ENCODE measurements at regions of chr17 and their contacts with region 1.

Region 1: GRCh38 chr17:38539386-38539785 is 66.4 kb downstream of the SRCIN1 start:
- DNase-seq: no peak
- ATAC-seq: no peak
- H3K4me3 ChIP-seq: no peak overlapping the region
- H3K27ac ChIP-seq: no peak overlapping the region
- H3K4me1 ChIP-seq: no peaks in the 10 kb centered on the region
- H3K27me3 ChIP-seq: no peaks in the 10 kb centered on the region
- CTCF ChIP-seq: no peak
- POLR2A ChIP-seq: no peak
- RAD21 ChIP-seq: no peak

Region 2: GRCh38 chr17:38421871-38422827 is 117.2 kb before region 1 on chr17:
- CTCF ChIA-PET with region 1: interaction called, 10 read pairs
- POLR2A ChIA-PET with region 1: no interaction called
- RAD21 ChIA-PET with region 1: no interaction called
- intact Hi-C with region 1: no loop called
- DNase-seq: no peak
- ATAC-seq: no peak
- H3K4me3 ChIP-seq: no peak overlapping the region
- H3K27ac ChIP-seq: no peak overlapping the region
- H3K4me1 ChIP-seq: peaks cover 5 to 17% of the 10 kb centered on the region in 2 experiments; a peak in 3 of 4 replicates
- H3K27me3 ChIP-seq: no peaks in the 10 kb centered on the region
- CTCF ChIP-seq: no peak
- POLR2A ChIP-seq: no peak
- RAD21 ChIP-seq: no peak

Region 3: DNA sequence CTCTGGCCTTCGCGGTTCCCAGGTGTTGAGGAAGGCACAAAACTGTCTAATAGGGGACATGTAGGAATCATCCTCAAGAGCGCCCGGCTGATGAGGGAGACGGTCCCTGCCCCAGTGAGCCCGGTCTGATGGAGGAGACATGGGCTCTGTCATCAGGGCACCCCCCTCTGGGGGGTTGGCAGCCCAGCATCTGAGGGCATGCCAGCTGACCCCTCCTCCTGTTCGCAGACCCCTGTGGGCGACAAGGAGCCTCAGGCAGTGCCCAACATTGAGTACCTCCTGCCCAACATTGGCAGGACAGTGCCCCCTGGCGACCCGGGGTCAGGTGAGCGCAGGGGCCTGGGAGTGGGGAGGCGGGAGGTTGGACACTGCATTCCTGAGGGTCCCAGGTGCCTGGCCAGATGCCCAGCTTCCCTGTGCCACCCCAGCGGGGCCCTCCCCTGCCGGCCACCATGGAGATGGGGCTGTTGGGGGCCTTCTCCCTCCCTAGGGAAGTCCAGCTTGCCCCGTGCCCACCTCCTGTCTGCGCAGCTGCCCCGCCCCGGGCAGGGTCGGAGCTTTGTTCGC is 41.1 kb before region 1 on chr17:
- CTCF ChIA-PET with region 1: interaction called, 4 read pairs
- POLR2A ChIA-PET with region 1: no interaction called
- RAD21 ChIA-PET with region 1: no interaction called
- intact Hi-C with region 1: loop called (anchors 2 kb)
- DNase-seq: no peak
- ATAC-seq: no peak
- H3K4me3 ChIP-seq: no peak overlapping the region
- H3K27ac ChIP-seq: no peak overlapping the region
- H3K4me1 ChIP-seq: no peaks in the 10 kb centered on the region
- H3K27me3 ChIP-seq: no peaks in the 10 kb centered on the region
- CTCF ChIP-seq: no peak
- POLR2A ChIP-seq: no peak
- RAD21 ChIP-seq: no peak

Region 4: DNA sequence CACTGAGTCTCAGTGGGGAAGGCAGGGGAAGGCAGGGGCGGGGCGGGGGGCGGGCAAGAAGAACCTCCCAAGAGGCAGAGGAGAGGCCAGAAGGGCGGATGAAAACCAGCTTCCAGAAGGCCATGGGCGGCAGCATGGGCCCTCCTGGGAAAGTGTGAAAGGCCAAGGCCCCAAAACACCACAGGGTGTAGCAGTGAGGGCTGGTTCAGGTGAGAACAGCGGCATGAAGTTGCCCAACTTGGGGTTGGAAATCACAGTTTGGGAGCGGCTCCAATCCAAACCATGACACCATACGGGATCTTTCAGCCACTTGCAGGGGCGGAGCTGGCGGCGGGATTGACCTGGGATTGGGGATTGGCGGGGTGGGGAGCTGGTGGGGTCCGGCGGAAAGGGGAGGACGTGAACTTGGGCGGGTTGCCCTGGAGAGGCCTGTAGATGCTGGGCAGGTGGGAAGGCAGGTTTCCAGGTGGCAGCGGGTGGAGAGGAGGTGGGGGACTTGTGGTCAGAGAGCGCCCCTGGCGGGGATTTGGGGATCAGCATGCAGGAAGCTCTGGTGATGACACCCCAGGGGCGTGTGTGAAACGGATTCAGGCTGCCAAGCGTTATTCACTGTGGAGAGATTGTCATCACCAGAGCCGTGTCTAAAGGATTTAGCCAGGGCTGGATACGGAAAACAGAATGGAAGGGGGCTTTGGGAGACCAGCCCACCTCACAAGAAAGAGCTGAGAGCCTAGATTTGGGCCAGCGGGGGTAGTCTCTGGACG is 30.2 kb before region 1 on chr17:
- CTCF ChIA-PET with region 1: no interaction called
- POLR2A ChIA-PET with region 1: no interaction called
- RAD21 ChIA-PET with region 1: no interaction called
- intact Hi-C with region 1: no loop called
- DNase-seq: peak; percentile 65
- ATAC-seq: peak; percentile 89
- H3K4me3 ChIP-seq: no peak overlapping the region
- H3K27ac ChIP-seq: no peak overlapping the region
- H3K4me1 ChIP-seq: peaks cover 0 to 22% of the 10 kb centered on the region in 2 experiments; a peak in 2 of 4 replicates
- H3K27me3 ChIP-seq: no peaks in the 10 kb centered on the region
- CTCF ChIP-seq: peak; percentile 53 to 91 (median 81); a peak in 5 of 6 replicates
- POLR2A ChIP-seq: no peak
- RAD21 ChIP-seq: peak; percentile 52

Region 5: GRCh38 chr17:38568845-38569510 is 29.6 kb after region 1 on chr17:
- CTCF ChIA-PET with region 1: no interaction called
- POLR2A ChIA-PET with region 1: no interaction called
- RAD21 ChIA-PET with region 1: no interaction called
- intact Hi-C with region 1: no loop called
- DNase-seq: no peak
- ATAC-seq: no peak
- H3K4me3 ChIP-seq: no peak overlapping the region
- H3K27ac ChIP-seq: no peak overlapping the region
- H3K4me1 ChIP-seq: peaks cover 8 to 18% of the 10 kb centered on the region in 2 experiments
- H3K27me3 ChIP-seq: no peaks in the 10 kb centered on the region
- CTCF ChIP-seq: no peak
- POLR2A ChIP-seq: no peak
- RAD21 ChIP-seq: no peak

Region 6: GRCh38 chr17:38871247-38871991 is 332.0 kb after region 1 on chr17:
- CTCF ChIA-PET with region 1: no interaction called
- POLR2A ChIA-PET with region 1: no interaction called
- RAD21 ChIA-PET with region 1: no interaction called
- intact Hi-C with region 1: no loop called
- DNase-seq: no peak
- ATAC-seq: peak; percentile 22
- H3K4me3 ChIP-seq: peak overlapping the region; percentile 83 to 98
- H3K27ac ChIP-seq: peak overlapping the region; percentile 97
- H3K4me1 ChIP-seq: peaks cover 61 to 82% of the 10 kb centered on the region in 2 experiments
- H3K27me3 ChIP-seq: no peaks in the 10 kb centered on the region
- CTCF ChIP-seq: no peak
- POLR2A ChIP-seq: peak; percentile 41
- RAD21 ChIP-seq: peak; percentile 66; the same call in 1 of the 2 replicates

Measured in HCT116 (cell line).